ENCODE measurements at regions of chr20 and their contacts with region 1.

Region 1: DNA sequence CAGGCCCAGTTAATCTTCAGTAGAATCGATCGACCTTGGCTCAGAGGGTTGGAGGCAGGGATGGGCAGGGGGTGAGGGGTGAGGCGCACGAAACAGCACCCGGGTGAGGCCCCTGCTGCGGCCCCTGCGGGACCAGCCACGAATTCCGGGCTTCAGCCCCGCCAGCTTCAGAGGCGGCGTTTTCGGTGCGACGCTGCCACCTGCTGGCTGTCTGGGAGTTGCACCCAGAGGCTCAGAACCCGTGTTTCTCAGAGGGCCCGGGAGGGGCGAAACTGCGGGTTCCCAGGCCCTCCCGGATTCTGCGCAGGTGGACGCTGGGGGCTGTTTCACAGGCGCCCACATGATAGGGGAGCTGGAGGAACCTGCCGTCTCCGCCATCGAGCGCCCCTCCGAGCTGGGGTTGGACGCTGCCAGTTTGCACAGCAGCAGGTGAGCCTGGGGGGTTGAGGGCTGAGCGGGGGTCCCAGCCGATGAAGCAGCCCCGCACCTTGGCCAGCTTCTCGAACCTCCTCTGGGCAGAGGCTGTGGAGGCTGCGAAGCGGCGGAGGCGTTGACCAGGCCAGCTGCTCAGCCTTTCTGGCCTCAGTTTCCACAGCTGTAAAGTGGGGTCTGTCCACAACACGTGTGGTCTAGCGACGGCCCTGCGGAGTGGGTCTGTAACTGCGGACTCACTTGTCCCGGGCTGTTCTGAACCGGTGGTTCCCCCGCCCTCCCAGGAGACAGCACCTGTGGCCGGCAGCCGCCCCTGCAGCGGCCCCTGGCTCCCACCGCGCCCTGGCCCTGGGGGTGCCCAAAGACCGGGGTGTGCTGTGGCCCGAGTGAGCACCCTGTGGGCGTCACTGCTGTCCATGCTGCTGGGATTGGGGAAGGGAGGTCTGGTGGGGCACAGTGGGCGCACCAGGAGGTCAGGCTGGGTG is 2.5 kb upstream of the BHLHE23 start:
- DNase-seq: peak; percentile 33
- ATAC-seq: peak; percentile 98
- H3K4me3 ChIP-seq: no peak overlapping the region
- H3K27ac ChIP-seq: no peak overlapping the region
- H3K4me1 ChIP-seq: peaks cover 0 to 9% of the 10 kb centered on the region in 2 experiments; a peak in 1 of 4 replicates
- H3K27me3 ChIP-seq: no peaks in the 10 kb centered on the region
- CTCF ChIP-seq: peak; percentile 88 to 96 (median 92)
- POLR2A ChIP-seq: no peak
- RAD21 ChIP-seq: peak; percentile 97

Region 2: GRCh38 chr20:62822788-62823651 is 186.3 kb before region 1 on chr20:
- CTCF ChIA-PET with region 1: interaction called, 9 read pairs
- POLR2A ChIA-PET with region 1: no interaction called
- RAD21 ChIA-PET with region 1: no interaction called
- intact Hi-C with region 1: loop called (anchors 2 kb)
- DNase-seq: peak; percentile 85
- ATAC-seq: peak; percentile 80
- H3K4me3 ChIP-seq: no peak overlapping the region
- H3K27ac ChIP-seq: peak overlapping the region; percentile 51
- H3K4me1 ChIP-seq: peaks cover 52 to 58% of the 10 kb centered on the region in 2 experiments
- H3K27me3 ChIP-seq: no peaks in the 10 kb centered on the region
- CTCF ChIP-seq: peak in 2 of 3 experiments; percentile 60 to 77; a peak in 4 of 6 replicates
- POLR2A ChIP-seq: no peak
- RAD21 ChIP-seq: no peak

Region 3: DNA sequence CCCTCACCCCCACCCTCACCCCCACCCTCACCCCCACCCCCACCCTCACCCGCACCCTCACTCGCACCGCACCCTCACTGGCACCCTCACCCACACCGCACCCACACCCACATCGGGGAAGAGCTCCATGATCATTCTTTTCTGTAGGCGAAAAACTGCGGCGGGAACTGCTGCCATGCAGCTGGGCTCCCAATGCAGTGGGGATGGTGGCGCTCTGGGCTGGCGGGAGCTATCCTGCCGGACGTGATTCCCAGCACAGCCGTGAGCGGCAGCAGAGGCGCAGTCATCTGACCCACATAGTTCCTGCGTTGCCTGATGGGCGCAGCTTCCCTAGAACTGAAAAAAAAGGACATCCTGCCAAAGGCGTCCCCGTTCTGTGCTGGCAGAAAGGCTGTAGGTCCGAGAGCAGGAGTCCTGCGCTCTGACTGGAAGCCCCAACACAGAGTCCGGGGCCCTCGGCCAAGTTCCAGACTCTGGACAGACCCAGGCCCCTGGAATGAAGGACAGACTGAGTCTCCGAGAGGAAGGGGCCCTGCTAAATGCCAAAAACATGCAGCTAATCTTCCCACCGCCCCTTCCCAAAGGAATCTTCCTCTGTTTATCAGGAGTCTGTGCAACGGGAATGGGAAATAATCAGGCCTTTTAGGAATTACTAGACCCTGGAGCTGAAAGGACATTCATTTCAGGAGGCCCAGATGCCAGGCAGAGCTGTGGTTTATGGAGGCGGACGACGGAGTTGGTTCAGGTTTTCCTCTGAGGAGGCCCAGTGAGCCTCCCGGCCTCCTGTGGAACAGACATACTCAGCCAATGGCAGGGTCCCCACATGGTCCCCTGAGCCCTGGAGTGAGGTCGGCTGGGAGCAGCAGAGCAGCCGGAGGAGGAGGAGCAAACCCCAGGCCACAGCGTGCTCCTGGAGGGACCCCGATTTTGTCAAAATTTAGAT is 133.6 kb before region 1 on chr20:
- CTCF ChIA-PET with region 1: no interaction called
- POLR2A ChIA-PET with region 1: interaction called, 4 read pairs
- RAD21 ChIA-PET with region 1: no interaction called
- intact Hi-C with region 1: loop called (anchors 1 kb)
- DNase-seq: peak; percentile 71
- ATAC-seq: peak; percentile 92
- H3K4me3 ChIP-seq: peak overlapping the region; percentile 18 to 30; a peak in 3 of 4 replicates
- H3K27ac ChIP-seq: peak overlapping the region; percentile 77
- H3K4me1 ChIP-seq: peaks cover 13 to 26% of the 10 kb centered on the region in 2 experiments
- H3K27me3 ChIP-seq: no peaks in the 10 kb centered on the region
- CTCF ChIP-seq: peak; percentile 54 to 59 (median 56); a peak in 5 of 6 replicates
- POLR2A ChIP-seq: no peak
- RAD21 ChIP-seq: peak; percentile 35; the same call in 1 of the 2 replicates

Region 4: GRCh38 chr20:62900052-62900691 is 109.1 kb before region 1 on chr20:
- CTCF ChIA-PET with region 1: interaction called, 4 read pairs
- POLR2A ChIA-PET with region 1: no interaction called
- RAD21 ChIA-PET with region 1: no interaction called
- intact Hi-C with region 1: loop called (anchors 1 kb)
- DNase-seq: peak; percentile 23
- ATAC-seq: peak; percentile 94
- H3K4me3 ChIP-seq: no peak overlapping the region
- H3K27ac ChIP-seq: peak overlapping the region; percentile 44
- H3K4me1 ChIP-seq: peaks cover 5 to 19% of the 10 kb centered on the region in 2 experiments; a peak in 3 of 4 replicates
- H3K27me3 ChIP-seq: no peaks in the 10 kb centered on the region
- CTCF ChIP-seq: peak; percentile 68 to 84 (median 77)
- POLR2A ChIP-seq: no peak
- RAD21 ChIP-seq: peak; percentile 67

Region 5: GRCh38 chr20:62972270-62973032 is 36.9 kb before region 1 on chr20:
- CTCF ChIA-PET with region 1: interaction called, 27 read pairs
- POLR2A ChIA-PET with region 1: interaction called, 5 read pairs
- RAD21 ChIA-PET with region 1: interaction called, 10 to 13 read pairs
- intact Hi-C with region 1: loop called (anchors 1 kb)
- DNase-seq: peak; percentile 63
- ATAC-seq: peak; percentile 95
- H3K4me3 ChIP-seq: peak overlapping the region; percentile 35 to 47
- H3K27ac ChIP-seq: no peak overlapping the region; the same call in 1 of the 2 replicates
- H3K4me1 ChIP-seq: peaks cover 7 to 12% of the 10 kb centered on the region in 2 experiments; a peak in 3 of 4 replicates
- H3K27me3 ChIP-seq: no peaks in the 10 kb centered on the region
- CTCF ChIP-seq: peak; percentile 86 to 91 (median 90)
- POLR2A ChIP-seq: no peak
- RAD21 ChIP-seq: peak; percentile 97

Region 6: DNA sequence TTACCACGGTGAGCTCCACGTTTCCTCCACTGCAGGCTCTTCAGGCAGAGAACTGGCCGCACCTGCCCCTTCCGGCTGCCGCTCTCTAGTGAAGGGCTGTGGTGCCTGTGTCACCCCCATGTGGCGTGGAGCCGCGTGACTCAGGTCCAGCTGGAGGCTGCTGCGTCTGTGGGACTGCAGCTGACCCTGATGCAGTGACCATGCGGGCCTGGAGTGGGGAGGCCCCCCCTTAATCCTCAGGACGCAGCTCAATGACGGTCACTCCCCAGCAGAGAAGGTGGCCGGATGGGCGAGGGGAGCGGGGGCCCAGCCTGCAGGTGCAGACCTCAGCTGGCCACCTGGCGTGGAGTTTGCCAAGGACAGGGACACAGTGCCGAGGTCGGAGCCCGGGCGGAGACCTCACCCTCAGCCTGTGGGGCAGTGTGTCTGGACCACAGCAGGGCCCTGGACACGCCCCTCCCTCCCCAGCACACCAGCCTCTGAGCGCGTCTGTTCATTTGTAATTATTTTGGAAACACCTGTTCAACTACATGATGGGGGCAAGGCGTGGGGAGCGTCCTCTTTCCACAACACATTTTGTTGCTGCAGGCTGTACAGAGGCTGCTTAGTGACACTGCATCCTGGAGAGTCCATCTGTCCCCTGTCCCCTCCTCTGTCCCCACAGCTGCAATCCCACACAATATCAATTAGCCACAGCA is 13.3 kb before region 1 on chr20:
- CTCF ChIA-PET with region 1: no interaction called
- POLR2A ChIA-PET with region 1: no interaction called
- RAD21 ChIA-PET with region 1: no interaction called
- intact Hi-C with region 1: no loop called
- DNase-seq: no peak
- ATAC-seq: no peak
- H3K4me3 ChIP-seq: no peak overlapping the region
- H3K27ac ChIP-seq: no peak overlapping the region
- H3K4me1 ChIP-seq: no peaks in the 10 kb centered on the region
- H3K27me3 ChIP-seq: no peaks in the 10 kb centered on the region
- CTCF ChIP-seq: no peak
- POLR2A ChIP-seq: no peak
- RAD21 ChIP-seq: no peak

Region 7: DNA sequence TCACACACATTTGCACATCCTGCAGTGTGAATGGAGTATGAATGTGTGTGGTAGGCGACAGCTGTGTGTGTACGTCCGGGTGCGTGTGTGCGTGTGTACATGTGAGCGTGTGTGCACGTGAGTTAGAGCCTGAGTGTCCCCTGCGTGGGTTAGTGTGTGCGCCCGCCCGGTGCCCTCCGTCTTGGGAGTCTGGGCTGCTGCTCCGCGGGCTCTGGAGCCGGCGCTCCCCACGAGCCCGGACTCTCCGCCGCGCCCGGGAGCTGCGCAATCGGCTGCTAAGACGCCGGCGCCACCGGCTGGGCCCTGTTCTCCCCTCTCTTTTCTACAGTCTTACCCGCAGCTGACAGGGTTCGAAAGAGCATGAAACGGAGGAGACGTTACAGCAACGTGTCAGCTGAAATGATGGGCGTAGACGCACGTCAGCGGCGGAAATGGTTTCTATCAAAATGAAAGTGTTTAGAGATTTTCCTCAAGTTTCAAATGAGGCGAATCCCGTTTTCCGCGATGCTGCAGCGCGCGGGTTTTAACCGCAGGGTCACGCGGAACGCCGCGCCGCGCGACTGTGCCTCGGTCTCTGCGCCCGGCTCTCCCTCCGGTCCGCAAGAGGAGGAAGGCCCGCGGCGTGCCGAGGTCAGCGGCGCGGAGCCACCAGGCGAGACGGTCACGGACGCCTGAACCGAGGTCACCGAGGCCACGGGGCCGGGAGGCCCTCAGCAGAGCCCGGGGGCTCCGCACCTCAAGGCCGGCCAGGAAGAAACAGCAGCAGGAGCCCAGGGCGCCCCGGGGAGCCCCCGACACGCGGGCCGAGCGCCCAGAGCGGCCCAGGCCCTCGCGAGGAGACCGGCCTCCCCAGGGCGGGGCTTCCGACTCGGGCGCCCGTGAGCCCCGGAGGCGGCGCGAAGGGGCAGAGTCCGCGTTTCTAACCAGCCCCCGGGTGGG is 92.7 kb after region 1 on chr20:
- CTCF ChIA-PET with region 1: no interaction called
- POLR2A ChIA-PET with region 1: no interaction called
- RAD21 ChIA-PET with region 1: no interaction called
- intact Hi-C with region 1: no loop called
- DNase-seq: no peak
- ATAC-seq: peak; percentile 82
- H3K4me3 ChIP-seq: peak overlapping the region; percentile 46 to 63
- H3K27ac ChIP-seq: peak overlapping the region; percentile 29; the same call in 1 of the 2 replicates
- H3K4me1 ChIP-seq: peaks cover 0 to 15% of the 10 kb centered on the region in 2 experiments; a peak in 2 of 4 replicates
- H3K27me3 ChIP-seq: peaks cover 4% of the 10 kb centered on the region; the same call in 1 of the 2 replicates
- CTCF ChIP-seq: no peak
- POLR2A ChIP-seq: no peak
- RAD21 ChIP-seq: no peak